ENCODE measurements at regions of chr7 and their contacts with region 1.

Region 1: DNA sequence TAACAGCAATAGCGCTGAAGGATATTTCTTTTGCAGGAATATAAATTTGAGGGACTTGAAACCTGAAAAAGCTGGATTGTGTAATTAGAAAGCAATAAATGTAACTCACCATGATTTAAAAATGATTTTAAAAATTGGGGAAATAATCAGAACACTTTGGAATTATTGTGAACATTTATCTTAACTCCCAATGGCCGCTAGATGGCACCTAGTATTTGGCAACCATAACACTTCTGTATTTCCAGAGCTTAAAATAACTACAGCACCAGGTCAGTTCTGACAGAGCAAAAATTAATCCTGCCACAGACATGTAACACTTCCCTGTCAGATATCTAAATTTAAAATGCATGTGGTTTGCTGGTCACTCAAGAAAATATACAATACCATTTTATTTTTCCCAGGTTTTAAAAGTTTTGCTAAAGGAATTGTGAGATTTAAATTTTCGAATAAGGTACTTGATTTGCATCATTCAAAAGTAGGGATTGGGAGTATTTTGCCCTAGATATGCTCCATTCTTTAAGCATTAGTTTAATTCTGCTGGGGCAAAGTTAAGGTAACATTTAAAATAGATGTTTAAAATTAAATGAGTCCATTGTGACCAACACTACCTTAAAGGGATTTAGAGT is 144.5 kb downstream of the PPP1R3A start:
- DNase-seq: peak; percentile 21
- H3K4me3 ChIP-seq: no peak overlapping the region
- H3K27ac ChIP-seq: no peak overlapping the region
- H3K4me1 ChIP-seq: no peaks in the 10 kb centered on the region
- H3K27me3 ChIP-seq: peaks cover 24% of the 10 kb centered on the region
- CTCF ChIP-seq: peak; percentile 96
- EP300 ChIP-seq: no peak
- RAD21 ChIP-seq: peak; percentile 70

Region 2: GRCh38 chr7:113790025-113790424 is 15.7 kb after region 1 on chr7:
- CTCF ChIA-PET with region 1: interaction called, 27 read pairs
- POLR2A ChIA-PET with region 1: no interaction called
- DNase-seq: no peak
- H3K4me3 ChIP-seq: no peak overlapping the region
- H3K27ac ChIP-seq: no peak overlapping the region
- H3K4me1 ChIP-seq: no peaks in the 10 kb centered on the region
- H3K27me3 ChIP-seq: peaks cover 6% of the 10 kb centered on the region; the same call in 1 of the 2 replicates
- CTCF ChIP-seq: no peak
- EP300 ChIP-seq: no peak
- RAD21 ChIP-seq: no peak

Region 3: DNA sequence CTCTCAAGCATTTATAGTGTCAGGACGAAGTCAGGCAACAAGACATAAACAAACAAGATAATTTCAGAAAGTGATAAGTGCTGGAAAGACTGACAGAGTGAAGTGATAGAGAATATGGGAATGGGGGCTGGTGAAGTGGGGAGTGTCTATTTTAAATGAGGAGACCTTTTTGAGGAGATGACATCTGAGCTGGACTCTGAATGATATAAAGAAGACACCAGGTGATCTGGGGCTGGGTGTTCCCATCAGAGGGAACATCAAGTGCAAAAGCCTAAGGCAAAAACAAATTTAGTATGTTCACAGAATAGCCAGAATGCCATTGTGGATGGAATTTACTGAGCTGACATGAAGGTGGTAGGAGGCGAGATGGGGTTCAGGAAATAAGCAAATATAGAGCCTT is 61.1 kb after region 1 on chr7:
- CTCF ChIA-PET with region 1: interaction called, 12 read pairs
- POLR2A ChIA-PET with region 1: no interaction called
- DNase-seq: no peak
- H3K4me3 ChIP-seq: no peak overlapping the region
- H3K27ac ChIP-seq: no peak overlapping the region
- H3K4me1 ChIP-seq: no peaks in the 10 kb centered on the region
- H3K27me3 ChIP-seq: no peaks in the 10 kb centered on the region
- CTCF ChIP-seq: no peak
- EP300 ChIP-seq: no peak
- RAD21 ChIP-seq: no peak

Measured in SK-N-SH (cell line).